GM13977 (cell line): ENCODE measurements at regions of chr11 and their contacts with region 1.

Region 1: GRCh38 chr11:110121204-110121603 is 28.0 kb downstream of the ZC3H12C start:
- DNase-seq: no peak
- CTCF ChIP-seq: no peak

Region 2: DNA sequence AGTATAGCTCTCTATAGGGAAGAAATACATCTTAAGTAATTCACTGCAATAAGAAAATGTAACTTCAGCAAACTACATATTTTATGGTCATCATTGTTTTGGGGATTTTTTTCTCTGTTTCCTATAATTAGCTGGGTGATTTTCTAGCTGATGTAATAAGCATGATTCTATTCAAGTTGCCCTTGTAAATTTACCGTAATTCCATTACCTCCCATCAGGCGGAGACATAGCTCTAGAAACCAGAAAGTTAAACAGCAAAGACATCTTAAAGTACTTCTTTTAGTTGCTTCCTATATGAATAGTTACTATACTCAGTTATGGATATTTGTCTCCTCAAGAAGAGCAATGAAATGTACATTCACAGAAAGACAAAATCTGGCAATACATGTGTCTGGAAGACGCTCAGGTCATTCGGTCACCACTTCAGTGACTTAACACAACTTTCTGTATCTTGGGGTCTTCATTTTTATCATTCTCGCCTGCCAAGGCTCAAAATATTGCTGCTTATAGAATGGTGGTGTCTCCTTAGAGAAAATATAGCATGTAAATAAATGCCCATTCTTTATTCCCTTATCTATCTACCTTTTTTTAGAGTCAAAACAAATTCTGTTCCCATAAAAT is 267.9 kb before region 1 on chr11:
- in situ Hi-C with region 1: loop called (anchors 25 kb)
- DNase-seq: peak; percentile 14
- CTCF ChIP-seq: peak; percentile 77

Region 3: DNA sequence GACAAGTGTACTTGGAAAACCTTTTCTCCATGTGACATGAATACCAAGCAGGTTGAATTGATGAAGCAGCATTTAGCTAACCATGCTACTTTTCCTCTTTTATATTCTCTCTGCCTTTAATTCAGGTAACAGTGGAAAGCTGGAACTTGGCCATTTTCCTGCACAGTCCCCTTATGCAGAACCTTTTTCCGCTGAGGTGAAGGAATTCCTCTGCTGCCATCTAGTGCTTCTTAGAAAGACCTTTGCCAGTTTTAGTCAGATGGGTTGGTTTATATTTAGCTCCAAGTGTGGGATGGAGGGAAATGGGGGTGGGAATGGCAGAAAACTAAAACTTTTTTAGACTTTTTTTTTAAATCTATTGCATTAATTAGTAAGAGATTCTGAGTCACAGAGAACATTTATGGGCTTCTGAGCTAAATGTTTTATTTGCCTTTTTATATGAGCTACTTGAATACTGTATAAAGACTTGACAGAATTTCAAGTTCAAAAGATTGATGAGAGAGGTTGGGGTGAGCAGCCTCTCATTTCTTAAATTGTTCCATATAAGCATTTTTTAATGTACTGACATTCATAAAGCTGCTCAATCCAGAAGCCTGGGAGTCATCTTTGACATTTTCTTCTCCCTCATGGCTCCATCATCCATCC is 181.9 kb before region 1 on chr11:
- in situ Hi-C with region 1: no loop called
- DNase-seq: no peak
- CTCF ChIP-seq: peak; percentile 67

Region 4: GRCh38 chr11:110327508-110327907 is 206.3 kb after region 1 on chr11:
- in situ Hi-C with region 1: no loop called
- DNase-seq: no peak
- CTCF ChIP-seq: no peak

Region 5: GRCh38 chr11:110447897-110448745 is 326.9 kb after region 1 on chr11:
- in situ Hi-C with region 1: no loop called
- DNase-seq: no peak
- CTCF ChIP-seq: peak; percentile 50

Region 6: DNA sequence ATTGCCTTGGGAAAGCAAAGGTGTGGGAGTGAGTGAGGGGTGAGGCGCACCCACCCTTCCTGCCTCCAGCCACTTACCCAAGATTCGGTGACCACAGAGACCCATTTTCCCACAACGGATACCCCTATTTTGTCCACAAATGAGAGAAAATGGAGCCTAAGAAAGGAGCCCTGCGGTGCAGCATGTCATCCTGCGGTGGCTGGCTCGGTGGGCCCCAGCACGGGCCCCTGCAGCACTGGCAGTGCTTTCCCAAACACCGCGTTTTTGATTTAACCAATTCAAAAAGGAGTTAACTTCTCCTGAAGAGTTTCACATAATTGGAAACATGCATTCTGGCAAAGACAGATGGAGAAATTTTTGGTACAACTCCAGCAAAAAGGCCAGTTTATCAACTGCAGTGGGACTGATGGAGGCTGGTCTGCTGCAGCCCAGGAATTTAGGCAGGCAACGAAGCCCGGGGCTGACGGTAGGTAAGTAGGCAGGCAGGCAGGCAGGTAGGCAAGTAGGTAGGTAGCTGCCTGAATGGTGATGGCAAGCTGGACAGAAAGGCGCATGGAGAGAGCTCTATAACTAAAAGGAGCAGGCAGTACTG is 392.7 kb after region 1 on chr11:
- in situ Hi-C with region 1: no loop called
- DNase-seq: no peak
- CTCF ChIP-seq: no peak